Lower lobe of right lung (tissue), 2 donors: ENCODE measurements at regions of chr15 and their contacts with region 1.

Region 1: GRCh38 chr15:83559310-83559966 is 94.5 kb upstream of the ADAMTSL3 start:
- DNase-seq: no peak
- ATAC-seq: peak; percentile 82 to 87
- H3K4me3 ChIP-seq: no peak overlapping the region
- H3K27ac ChIP-seq: no peak overlapping the region
- H3K4me1 ChIP-seq: no peaks in the 10 kb centered on the region
- H3K27me3 ChIP-seq: no peaks in the 10 kb centered on the region
- CTCF ChIP-seq: peak; percentile 78

Region 2: DNA sequence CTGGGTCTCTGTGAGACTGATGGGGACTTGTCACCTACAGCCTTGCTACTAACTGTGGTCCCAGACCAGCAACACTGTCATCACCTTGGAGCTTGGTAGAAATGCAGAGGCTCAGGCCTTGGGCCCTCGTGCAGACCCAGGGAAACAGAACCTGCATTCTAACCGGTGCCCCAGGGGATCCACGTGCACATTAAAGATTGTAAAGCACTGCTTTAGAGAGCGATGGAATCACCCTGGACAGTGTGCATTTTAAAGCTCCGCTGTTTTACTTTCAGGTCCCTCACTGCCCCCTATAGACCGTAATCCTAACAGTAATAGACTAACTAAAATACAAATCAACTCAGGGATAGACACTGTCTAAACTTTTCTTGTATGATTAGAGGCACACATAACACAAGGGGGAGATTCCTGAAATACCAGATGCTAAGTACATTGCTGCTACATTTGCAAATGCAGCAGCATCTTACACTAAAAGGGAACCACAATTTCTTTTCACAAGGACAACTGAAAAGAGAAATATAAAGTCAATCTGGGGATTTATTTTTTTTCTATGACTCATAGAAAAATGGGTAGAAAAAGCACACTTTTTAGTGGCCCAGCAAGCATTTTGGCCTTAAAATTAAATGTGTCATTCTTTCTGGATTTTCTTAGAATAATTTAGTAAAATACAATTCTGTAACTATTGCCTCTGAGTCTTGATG is 122.8 kb before region 1 on chr15:
- intact Hi-C with region 1: loop called (anchors 10 kb)
- DNase-seq: no peak
- ATAC-seq: peak; percentile 61 to 66
- H3K4me3 ChIP-seq: no peak overlapping the region
- H3K27ac ChIP-seq: no peak overlapping the region
- H3K4me1 ChIP-seq: no peaks in the 10 kb centered on the region
- H3K27me3 ChIP-seq: peaks cover 9% of the 10 kb centered on the region
- CTCF ChIP-seq: peak; percentile 19

Region 3: DNA sequence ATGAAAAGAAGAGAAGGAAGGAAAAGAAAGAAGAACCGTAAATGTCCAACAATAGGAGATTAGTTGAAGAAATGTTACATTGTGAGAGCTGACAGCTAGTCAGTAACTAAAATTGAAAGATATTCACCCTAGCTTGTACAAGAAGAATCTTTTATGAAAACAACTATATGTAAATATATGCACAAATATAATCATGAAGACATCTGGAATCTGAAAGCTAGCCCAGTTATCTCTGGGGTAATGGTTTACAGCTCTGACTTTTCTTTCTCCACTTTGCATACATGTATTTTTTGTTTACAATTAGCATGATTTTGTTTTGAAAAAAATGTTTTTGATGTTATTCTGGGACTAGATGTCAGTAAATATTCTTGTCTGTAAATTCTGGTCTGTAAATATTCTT is 57.4 kb after region 1 on chr15:
- intact Hi-C with region 1: no loop called
- DNase-seq: no peak
- ATAC-seq: no peak
- H3K4me3 ChIP-seq: no peak overlapping the region
- H3K27ac ChIP-seq: no peak overlapping the region
- H3K4me1 ChIP-seq: no peaks in the 10 kb centered on the region
- H3K27me3 ChIP-seq: no peaks in the 10 kb centered on the region
- CTCF ChIP-seq: no peak

Region 4: DNA sequence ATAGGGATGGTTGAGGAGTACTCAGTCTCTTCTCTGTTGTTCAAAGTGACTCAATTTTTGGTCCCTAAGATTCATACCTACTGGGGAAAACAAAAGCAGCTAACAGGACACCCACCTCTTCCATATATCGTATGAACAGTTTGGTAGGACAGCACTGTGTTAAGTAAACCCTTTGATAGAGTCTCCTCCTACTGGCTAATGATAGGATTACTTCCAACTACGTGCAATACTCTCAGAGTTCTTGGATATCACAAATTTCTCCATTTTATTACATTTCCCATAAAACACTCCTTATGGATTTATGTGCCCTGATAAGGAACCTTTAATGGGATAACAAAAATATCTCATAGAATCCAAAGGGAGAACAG is 475.9 kb after region 1 on chr15:
- intact Hi-C with region 1: loop called (anchors 10 kb)
- DNase-seq: no peak
- ATAC-seq: peak; percentile 41 to 56
- H3K4me3 ChIP-seq: no peak overlapping the region
- H3K27ac ChIP-seq: no peak overlapping the region
- H3K4me1 ChIP-seq: no peaks in the 10 kb centered on the region
- H3K27me3 ChIP-seq: no peaks in the 10 kb centered on the region
- CTCF ChIP-seq: peak; percentile 25